Endothelial cell of umbilical vein (primary cell): ENCODE measurements at regions of chr2 and their contacts with region 1.

Region 1: DNA sequence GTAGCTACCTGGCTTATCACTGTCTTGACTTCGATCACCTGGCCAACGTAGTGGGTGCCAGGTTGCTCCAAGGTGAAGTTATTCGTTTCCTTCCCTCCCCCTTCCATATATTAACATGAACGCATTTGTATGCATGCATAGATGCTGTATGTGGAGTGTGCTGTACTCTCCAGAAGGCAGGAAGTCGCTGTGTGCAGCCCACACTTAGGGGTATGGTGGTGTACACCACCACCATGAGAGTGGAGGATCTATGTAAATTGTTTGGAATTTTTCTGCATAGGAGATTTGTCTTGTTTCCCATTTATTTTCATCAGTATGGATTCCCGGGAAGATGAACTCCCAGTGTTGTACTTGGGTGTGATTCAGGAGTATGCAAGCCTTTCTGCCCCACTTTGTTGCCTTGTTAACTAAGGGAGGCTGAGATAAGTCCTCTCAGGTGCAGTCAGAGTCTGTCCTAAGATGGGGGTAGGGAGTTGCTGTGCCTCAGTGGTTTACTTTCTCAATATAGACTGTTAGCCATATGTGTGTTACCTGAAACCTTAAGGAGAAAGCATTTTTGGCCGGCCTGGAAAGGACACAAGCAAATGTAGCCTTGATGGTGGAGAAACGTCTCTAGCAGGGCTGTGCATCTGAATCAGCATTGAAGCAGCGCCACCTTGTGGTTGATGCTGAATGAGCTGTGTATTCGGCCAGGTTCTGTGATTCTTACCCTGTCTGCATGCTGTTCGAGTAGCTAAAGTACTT is 149.8 kb downstream of the TANC1 start:
- DNase-seq: peak; percentile 88
- H3K4me3 ChIP-seq: no peak overlapping the region
- H3K27ac ChIP-seq: peak overlapping the region; percentile 21
- H3K4me1 ChIP-seq: peaks cover 18% of the 10 kb centered on the region
- H3K27me3 ChIP-seq: no peaks in the 10 kb centered on the region
- CTCF ChIP-seq: peak; percentile 84 to 85
- POLR2A ChIP-seq: no peak

Region 2: DNA sequence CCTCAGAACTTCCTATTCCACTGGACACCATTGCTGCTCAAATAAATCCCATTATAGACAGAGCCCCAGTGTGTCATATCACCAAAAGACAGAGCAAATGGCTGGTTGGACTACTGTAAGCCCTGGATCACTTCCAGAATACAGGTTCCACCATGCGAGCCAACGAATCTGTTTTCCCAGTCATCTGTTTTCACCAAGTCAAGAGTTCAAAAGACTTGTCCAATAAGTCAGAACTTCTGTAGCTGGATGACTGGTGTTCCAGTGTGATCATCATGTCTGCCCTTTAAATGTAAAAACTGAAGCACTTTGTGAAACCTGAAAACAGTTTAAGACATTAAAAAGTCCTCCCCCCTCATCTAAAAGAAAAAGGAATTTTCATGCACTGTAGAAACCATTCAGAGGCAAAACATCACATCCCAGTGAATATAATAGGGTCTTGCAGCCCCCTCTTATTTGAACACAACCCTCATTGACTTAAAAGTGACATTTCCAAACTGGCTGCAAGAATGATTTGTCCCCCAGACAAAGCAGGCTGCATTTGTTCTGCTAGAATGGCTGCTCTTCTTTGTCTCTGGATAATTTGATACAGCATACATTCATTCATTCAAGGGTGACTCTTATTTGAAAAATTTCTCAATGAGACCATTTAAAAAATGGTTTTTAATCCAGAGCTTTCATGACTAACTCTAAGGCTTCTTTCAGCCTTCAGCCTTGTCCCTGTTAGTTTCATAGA is 214.4 kb before region 1 on chr2:
- CTCF ChIA-PET with region 1: interaction called, 104 read pairs
- POLR2A ChIA-PET with region 1: no interaction called
- dilution Hi-C with region 1: no loop called
- intact Hi-C with region 1: loop called (anchors 1 kb)
- DNase-seq: no peak
- H3K4me3 ChIP-seq: no peak overlapping the region
- H3K27ac ChIP-seq: no peak overlapping the region
- H3K4me1 ChIP-seq: no peaks in the 10 kb centered on the region
- H3K27me3 ChIP-seq: no peaks in the 10 kb centered on the region
- CTCF ChIP-seq: no peak
- POLR2A ChIP-seq: no peak

Region 3: DNA sequence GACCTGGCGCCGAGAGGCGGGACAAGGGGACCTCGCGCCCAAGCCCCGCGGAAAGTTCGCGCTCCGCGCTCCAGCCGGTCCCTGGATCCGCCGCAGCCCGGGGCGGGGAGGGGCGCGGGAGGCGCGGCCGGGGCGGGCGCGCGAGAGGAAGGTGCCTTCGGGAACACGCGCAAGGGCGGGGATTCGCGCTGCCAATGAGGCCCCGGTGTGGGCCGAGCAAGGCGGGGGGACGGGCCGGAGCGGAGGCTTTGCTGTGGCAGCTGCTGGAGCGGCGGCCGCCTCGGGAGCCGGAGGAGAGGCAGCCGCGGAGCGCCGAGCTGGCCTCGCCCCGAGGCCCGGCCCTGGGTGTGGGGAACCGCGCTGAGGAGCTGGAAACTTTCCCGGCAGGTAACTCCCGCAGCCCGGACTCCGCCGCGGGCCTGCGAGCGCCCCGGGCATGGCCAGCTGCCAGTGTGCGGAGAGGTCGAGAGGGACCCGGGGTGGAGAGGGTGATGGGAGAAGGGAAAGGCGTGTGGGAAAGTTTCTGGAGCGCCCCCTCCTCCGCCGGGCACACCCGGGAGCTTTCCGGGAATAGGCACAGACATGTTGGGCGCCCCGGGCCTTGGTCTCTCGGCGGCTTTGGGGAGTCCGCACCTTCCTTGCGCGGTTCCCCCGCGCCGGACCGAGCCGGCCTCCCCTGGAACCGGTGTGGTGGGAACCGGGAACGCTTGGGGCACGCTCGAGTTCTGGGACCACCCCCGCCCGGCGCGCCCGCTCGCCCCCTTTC is 149.7 kb before region 1 on chr2 and contains the start of gene TANC1:
- CTCF ChIA-PET with region 1: interaction called, 40 read pairs
- POLR2A ChIA-PET with region 1: no interaction called
- dilution Hi-C with region 1: no loop called
- intact Hi-C with region 1: loop called (anchors 1 kb)
- DNase-seq: peak; percentile 90
- H3K4me3 ChIP-seq: peak within 1 kb of the TSS; percentile 80 to 89 (median 89)
- H3K27ac ChIP-seq: peak within 1 kb of the TSS; percentile 75
- H3K4me1 ChIP-seq: peaks cover 36% of the 10 kb centered on the region
- H3K27me3 ChIP-seq: no peaks in the 10 kb centered on the region
- CTCF ChIP-seq: no peak
- POLR2A ChIP-seq: peak; percentile 96
- total RNA-seq, gene TANC1: 86.3 and 99.4 TPM in 2 replicates

Region 4: GRCh38 chr2:159035790-159036411 is 82.4 kb before region 1 on chr2:
- CTCF ChIA-PET with region 1: interaction called, 34 read pairs
- POLR2A ChIA-PET with region 1: interaction called, 3 read pairs
- dilution Hi-C with region 1: no loop called
- intact Hi-C with region 1: loop called (anchors 1 kb)
- DNase-seq: peak; percentile 46
- H3K4me3 ChIP-seq: no peak overlapping the region
- H3K27ac ChIP-seq: no peak overlapping the region
- H3K4me1 ChIP-seq: peaks cover 22% of the 10 kb centered on the region
- H3K27me3 ChIP-seq: no peaks in the 10 kb centered on the region
- CTCF ChIP-seq: peak in 1 of 2 donors; percentile 6
- POLR2A ChIP-seq: no peak

Region 5: DNA sequence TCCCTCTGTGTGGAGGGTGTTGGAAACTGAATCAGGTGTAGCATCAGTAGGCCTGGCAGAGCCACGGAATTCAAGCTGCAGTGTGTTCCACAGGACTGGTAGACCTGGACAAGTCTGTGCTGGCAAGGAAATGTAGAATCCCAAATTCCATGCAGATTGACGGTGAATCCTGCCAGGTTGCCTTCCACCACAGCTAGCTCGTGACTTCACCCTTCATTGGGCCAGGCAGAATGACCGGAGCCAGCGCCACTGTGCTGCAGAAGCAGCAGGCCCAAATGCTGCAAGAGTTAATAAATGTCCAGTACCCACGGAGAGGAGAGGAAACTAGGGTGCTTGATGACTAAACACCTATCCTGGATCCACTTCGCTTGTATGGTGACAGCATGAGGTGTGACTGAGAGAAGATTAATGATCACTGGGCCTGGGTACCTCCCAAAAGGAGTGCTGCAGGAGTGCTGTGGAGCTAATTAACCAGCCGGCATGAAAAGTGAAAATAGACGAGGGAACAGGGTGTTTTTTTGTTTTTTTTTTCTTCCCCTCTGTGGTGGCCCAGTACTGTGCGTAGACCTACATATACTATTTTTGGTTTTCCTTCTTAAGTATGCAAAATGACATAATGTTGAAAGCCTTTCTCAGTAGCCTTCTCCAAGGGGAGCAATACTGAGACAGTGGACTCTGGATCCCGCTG is 27.6 kb before region 1 on chr2:
- CTCF ChIA-PET with region 1: interaction called, 24 read pairs
- POLR2A ChIA-PET with region 1: interaction called, 4 read pairs
- dilution Hi-C with region 1: no loop called
- intact Hi-C with region 1: no loop called
- DNase-seq: peak; percentile 57
- H3K4me3 ChIP-seq: no peak overlapping the region
- H3K27ac ChIP-seq: peak overlapping the region; percentile 97
- H3K4me1 ChIP-seq: peaks cover 85% of the 10 kb centered on the region
- H3K27me3 ChIP-seq: no peaks in the 10 kb centered on the region
- CTCF ChIP-seq: no peak
- POLR2A ChIP-seq: no peak

Region 6: DNA sequence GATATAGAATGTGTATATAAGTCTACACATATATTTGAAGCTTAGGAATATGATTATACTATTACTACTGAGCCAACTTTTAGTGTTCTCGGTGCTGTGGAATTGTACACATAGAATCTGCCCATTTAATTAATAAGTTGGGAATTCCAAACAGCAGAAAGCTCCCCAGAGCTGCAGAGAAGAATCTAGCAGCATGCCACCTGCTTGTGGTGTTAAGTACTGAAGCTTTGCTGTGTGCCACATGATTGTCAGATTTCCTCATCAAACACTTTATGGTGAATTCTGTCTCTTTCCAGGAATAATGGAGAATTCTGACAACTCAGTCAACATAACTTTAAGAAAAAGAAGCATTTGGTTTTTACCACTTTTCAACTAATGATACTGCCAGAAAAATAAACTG is 50.4 kb after region 1 on chr2:
- CTCF ChIA-PET with region 1: interaction called, 35 read pairs
- POLR2A ChIA-PET with region 1: no interaction called
- dilution Hi-C with region 1: no loop called
- intact Hi-C with region 1: no loop called
- DNase-seq: peak; percentile 65
- H3K4me3 ChIP-seq: no peak overlapping the region
- H3K27ac ChIP-seq: peak overlapping the region; percentile 48
- H3K4me1 ChIP-seq: peaks cover 20% of the 10 kb centered on the region
- H3K27me3 ChIP-seq: no peaks in the 10 kb centered on the region
- CTCF ChIP-seq: peak; percentile 36 to 56
- POLR2A ChIP-seq: no peak

Region 7: DNA sequence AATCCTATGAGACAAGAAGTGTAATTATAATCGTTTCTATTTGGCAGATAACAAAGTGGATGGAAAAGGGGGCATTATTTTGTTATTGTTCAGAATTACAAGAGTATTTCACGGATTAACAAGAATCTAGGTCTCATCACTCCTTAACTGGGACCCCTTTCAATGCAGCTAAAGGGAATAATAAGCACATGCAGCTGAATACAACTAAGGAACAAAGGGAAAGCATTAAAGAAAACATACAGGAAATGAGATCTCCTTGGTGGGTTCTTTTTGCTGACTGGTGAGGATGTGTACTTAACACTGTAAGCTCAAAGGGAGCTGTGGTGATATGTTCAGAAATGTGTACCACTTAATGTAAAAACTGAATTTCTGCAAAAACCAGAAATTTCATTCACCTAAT is 308.8 kb after region 1 on chr2:
- CTCF ChIA-PET with region 1: no interaction called
- POLR2A ChIA-PET with region 1: no interaction called
- dilution Hi-C with region 1: no loop called
- intact Hi-C with region 1: no loop called
- DNase-seq: no peak
- H3K4me3 ChIP-seq: no peak overlapping the region
- H3K27ac ChIP-seq: no peak overlapping the region
- H3K4me1 ChIP-seq: peaks cover 6% of the 10 kb centered on the region
- H3K27me3 ChIP-seq: no peaks in the 10 kb centered on the region
- CTCF ChIP-seq: no peak
- POLR2A ChIP-seq: no peak